Caco-2 (cell line): ENCODE measurements at regions of chrX and their contacts with region 1.

Region 1: GRCh38 chrX:74343343-74344279 is 39.6 kb downstream of the ZCCHC13 start:
- DNase-seq: peak; percentile 67 to 68
- H3K4me3 ChIP-seq: no peak overlapping the region
- H3K4me3 Mint-ChIP-seq: no peak overlapping the region
- H3K27ac Mint-ChIP-seq: peak overlapping the region; percentile 24
- H3K4me1 ChIP-seq: peaks cover 28% of the 10 kb centered on the region
- H3K4me1 Mint-ChIP-seq: peaks cover 16% of the 10 kb centered on the region
- H3K27me3 ChIP-seq: no peaks in the 10 kb centered on the region
- H3K27me3 Mint-ChIP-seq: no peaks in the 10 kb centered on the region
- CTCF ChIP-seq: peak; percentile 29 to 67

Region 2: GRCh38 chrX:73855546-73855945 is 488.1 kb before region 1 on chrX:
- CTCF ChIA-PET with region 1: no interaction called
- POLR2A ChIA-PET with region 1: no interaction called
- intact Hi-C with region 1: loop called (anchors 1 kb)
- DNase-seq: peak; percentile 43 to 64
- H3K4me3 ChIP-seq: no peak overlapping the region
- H3K4me3 Mint-ChIP-seq: no peak overlapping the region
- H3K27ac Mint-ChIP-seq: no peak overlapping the region
- H3K4me1 ChIP-seq: no peaks in the 10 kb centered on the region
- H3K4me1 Mint-ChIP-seq: no peaks in the 10 kb centered on the region
- H3K27me3 ChIP-seq: no peaks in the 10 kb centered on the region
- H3K27me3 Mint-ChIP-seq: no peaks in the 10 kb centered on the region
- CTCF ChIP-seq: peak; percentile 54 to 56

Region 3: DNA sequence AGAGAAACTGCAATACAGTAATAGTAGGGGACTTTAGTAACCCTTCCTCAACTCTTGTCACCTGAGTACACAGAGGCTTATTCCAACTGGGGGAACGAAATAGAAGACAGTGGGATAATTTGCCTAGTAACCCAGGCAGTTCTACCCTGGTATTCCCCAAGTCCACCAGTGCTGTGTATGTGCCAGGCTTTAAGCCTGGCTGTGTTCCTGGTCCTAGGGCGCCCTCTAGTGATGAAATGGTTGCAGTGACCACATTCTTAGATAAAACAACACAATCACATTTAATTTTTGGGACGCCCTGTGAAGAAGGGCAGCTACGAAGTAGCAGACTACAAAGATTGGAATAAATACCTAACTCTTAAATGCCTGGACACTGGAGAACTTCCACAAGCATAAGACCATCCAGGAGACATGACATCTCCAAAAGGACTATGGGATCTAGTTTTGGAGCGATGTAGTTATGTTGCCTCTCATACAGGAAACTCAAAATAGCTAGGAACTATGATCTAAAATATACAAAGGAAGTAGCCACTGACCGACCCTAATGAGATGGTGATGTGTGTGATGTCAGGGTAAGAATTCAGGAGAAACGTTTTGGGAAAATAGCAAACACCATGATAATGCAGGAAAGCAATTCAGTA is 328.1 kb before region 1 on chrX:
- CTCF ChIA-PET with region 1: no interaction called
- POLR2A ChIA-PET with region 1: no interaction called
- intact Hi-C with region 1: loop called (anchors 1 kb)
- DNase-seq: peak; percentile 48 to 52
- H3K4me3 ChIP-seq: no peak overlapping the region
- H3K4me3 Mint-ChIP-seq: no peak overlapping the region
- H3K27ac Mint-ChIP-seq: no peak overlapping the region
- H3K4me1 ChIP-seq: no peaks in the 10 kb centered on the region
- H3K4me1 Mint-ChIP-seq: peaks cover 4% of the 10 kb centered on the region
- H3K27me3 ChIP-seq: no peaks in the 10 kb centered on the region
- H3K27me3 Mint-ChIP-seq: no peaks in the 10 kb centered on the region
- CTCF ChIP-seq: peak; percentile 65 to 68

Region 4: DNA sequence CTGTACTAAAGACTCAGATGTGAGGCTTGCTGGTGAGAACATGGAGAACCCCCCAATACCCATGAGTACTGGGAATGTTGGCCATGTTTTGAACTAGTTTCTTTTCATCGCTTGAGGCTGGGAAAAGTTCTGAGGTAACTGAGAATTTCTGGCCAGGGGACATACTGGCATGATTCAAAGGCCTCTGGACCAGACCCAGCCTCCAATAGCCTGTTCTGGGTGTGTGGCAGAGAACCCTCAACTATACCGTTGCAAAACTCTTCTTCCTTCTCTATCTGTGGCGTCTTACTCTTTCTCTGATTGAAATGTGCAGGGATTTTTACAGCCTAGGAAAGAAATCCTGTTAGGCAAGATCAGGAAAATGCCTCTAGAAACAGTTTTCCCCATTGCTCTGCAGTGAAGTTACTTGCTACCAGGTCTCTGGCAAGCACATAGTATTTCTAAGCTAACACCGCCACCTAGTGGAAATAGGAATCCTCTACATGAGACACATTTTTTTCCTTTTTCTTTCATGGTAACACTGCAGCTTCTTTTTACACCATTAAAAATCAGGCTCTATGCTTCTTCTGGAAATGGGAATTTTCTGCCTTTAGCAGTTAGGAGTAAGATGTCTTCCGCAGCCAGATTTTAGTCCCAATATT is 210.3 kb before region 1 on chrX:
- CTCF ChIA-PET with region 1: no interaction called
- POLR2A ChIA-PET with region 1: no interaction called
- intact Hi-C with region 1: loop called (anchors 1 kb)
- DNase-seq: peak in 1 of 2 experiments; percentile 44
- H3K4me3 ChIP-seq: no peak overlapping the region
- H3K4me3 Mint-ChIP-seq: no peak overlapping the region
- H3K27ac Mint-ChIP-seq: no peak overlapping the region
- H3K4me1 ChIP-seq: no peaks in the 10 kb centered on the region
- H3K4me1 Mint-ChIP-seq: no peaks in the 10 kb centered on the region
- H3K27me3 ChIP-seq: no peaks in the 10 kb centered on the region
- H3K27me3 Mint-ChIP-seq: no peaks in the 10 kb centered on the region
- CTCF ChIP-seq: peak; percentile 39 to 50

Region 5: GRCh38 chrX:74232859-74233258 is 110.8 kb before region 1 on chrX:
- CTCF ChIA-PET with region 1: no interaction called
- POLR2A ChIA-PET with region 1: no interaction called
- intact Hi-C with region 1: loop called (anchors 1 kb)
- DNase-seq: no peak
- H3K4me3 ChIP-seq: no peak overlapping the region
- H3K4me3 Mint-ChIP-seq: no peak overlapping the region
- H3K27ac Mint-ChIP-seq: no peak overlapping the region
- H3K4me1 ChIP-seq: no peaks in the 10 kb centered on the region
- H3K4me1 Mint-ChIP-seq: no peaks in the 10 kb centered on the region
- H3K27me3 ChIP-seq: no peaks in the 10 kb centered on the region
- H3K27me3 Mint-ChIP-seq: no peaks in the 10 kb centered on the region
- CTCF ChIP-seq: no peak

Region 6: DNA sequence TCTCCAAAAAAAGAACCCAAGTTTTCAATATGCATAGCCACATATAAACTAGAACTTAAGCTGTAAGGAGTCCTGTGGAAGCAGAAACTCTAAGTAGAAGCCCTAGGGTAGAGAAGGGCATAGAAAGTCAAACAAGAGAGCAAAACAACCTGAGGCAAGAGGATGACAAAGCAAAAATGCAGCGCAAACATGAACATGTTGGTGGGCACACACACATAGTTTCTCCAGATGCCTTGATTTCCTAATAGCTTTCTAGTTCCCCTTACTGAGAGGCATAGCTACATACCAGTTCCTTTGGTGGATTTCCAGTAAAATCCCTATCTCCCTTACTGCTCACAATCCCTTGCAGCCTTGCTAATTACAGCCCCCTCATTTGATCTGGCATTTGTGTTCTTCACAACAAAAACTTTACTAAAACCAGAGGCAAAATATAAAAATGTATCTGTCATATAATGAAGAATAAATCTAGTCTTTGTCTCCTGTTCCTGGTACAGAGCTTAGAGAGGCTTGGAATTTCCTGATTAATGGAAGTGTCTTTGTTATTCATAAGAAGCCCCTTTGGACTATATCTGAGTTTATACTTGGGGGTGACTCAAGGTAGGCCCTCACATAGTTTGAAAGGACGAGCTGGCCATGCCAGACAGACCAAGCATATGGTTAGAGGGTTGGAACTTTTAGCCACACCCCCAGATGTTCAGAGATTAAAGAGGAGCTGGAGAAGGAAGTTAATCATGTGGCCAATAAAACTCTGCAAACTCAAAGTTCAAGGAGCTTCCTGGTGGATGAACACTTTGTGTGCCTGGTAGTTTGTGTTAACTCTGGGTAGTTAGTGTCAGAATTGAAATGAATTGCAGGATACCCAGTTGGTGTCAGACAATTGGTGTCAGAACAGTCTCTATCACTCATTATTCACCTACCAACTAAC is 92.3 kb before region 1 on chrX:
- CTCF ChIA-PET with region 1: no interaction called
- POLR2A ChIA-PET with region 1: no interaction called
- intact Hi-C with region 1: loop called (anchors 5 kb)
- DNase-seq: peak in 1 of 2 experiments; percentile 12
- H3K4me3 ChIP-seq: no peak overlapping the region
- H3K4me3 Mint-ChIP-seq: no peak overlapping the region
- H3K27ac Mint-ChIP-seq: no peak overlapping the region
- H3K4me1 ChIP-seq: peaks cover 7% of the 10 kb centered on the region; the same call in 1 of the 2 replicates
- H3K4me1 Mint-ChIP-seq: peaks cover 9% of the 10 kb centered on the region
- H3K27me3 ChIP-seq: no peaks in the 10 kb centered on the region
- H3K27me3 Mint-ChIP-seq: no peaks in the 10 kb centered on the region
- CTCF ChIP-seq: no peak

Region 7: GRCh38 chrX:74291964-74292807 is 51.4 kb before region 1 on chrX:
- CTCF ChIA-PET with region 1: no interaction called
- POLR2A ChIA-PET with region 1: no interaction called
- intact Hi-C with region 1: loop called (anchors 1 kb)
- DNase-seq: peak; percentile 79 to 87
- H3K4me3 ChIP-seq: peak overlapping the region; percentile 78
- H3K4me3 Mint-ChIP-seq: peak overlapping the region; percentile 77
- H3K27ac Mint-ChIP-seq: peak overlapping the region; percentile 83
- H3K4me1 ChIP-seq: no peaks in the 10 kb centered on the region; the same call in 1 of the 2 replicates
- H3K4me1 Mint-ChIP-seq: no peaks in the 10 kb centered on the region
- H3K27me3 ChIP-seq: no peaks in the 10 kb centered on the region
- H3K27me3 Mint-ChIP-seq: no peaks in the 10 kb centered on the region
- CTCF ChIP-seq: peak in 1 of 2 experiments; percentile 38